ENCODE measurements at regions of chr19 and their contacts with region 1.

Region 1: DNA sequence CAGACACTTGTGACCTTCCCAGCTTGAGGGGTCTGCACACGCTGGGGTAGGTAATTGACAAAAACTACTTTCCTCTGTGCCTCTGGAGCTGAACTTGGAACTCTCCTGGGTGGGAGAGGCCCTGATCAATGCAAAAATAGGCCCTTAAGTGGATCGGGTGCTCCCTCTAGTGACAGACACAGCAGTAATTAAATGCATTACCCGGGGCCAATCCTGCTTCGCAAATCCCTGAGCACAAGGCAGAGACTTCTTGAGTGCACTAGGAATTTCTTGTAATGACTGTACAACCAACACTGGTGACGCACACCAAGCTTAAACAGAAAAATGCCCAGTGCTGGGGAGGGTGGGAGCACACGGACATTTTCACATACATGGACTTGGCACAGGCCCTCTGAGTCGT is 10.6 kb upstream of the UBE2S start:
- DNase-seq: peak; percentile 73
- H3K4me3 Mint-ChIP-seq: no peak overlapping the region
- H3K27ac Mint-ChIP-seq: no peak overlapping the region
- H3K4me1 Mint-ChIP-seq: peaks cover 13% of the 10 kb centered on the region
- H3K27me3 Mint-ChIP-seq: no peaks in the 10 kb centered on the region

Region 2: GRCh38 chr19:55216461-55217198 is 201.6 kb before region 1 on chr19:
- CTCF ChIA-PET with region 1: no interaction called
- intact Hi-C with region 1: loop called (anchors 1 kb)
- DNase-seq: peak; percentile 79
- H3K4me3 Mint-ChIP-seq: peak overlapping the region; percentile 50
- H3K27ac Mint-ChIP-seq: no peak overlapping the region
- H3K4me1 Mint-ChIP-seq: peaks cover 13% of the 10 kb centered on the region
- H3K27me3 Mint-ChIP-seq: peaks cover 22% of the 10 kb centered on the region

Region 3: DNA sequence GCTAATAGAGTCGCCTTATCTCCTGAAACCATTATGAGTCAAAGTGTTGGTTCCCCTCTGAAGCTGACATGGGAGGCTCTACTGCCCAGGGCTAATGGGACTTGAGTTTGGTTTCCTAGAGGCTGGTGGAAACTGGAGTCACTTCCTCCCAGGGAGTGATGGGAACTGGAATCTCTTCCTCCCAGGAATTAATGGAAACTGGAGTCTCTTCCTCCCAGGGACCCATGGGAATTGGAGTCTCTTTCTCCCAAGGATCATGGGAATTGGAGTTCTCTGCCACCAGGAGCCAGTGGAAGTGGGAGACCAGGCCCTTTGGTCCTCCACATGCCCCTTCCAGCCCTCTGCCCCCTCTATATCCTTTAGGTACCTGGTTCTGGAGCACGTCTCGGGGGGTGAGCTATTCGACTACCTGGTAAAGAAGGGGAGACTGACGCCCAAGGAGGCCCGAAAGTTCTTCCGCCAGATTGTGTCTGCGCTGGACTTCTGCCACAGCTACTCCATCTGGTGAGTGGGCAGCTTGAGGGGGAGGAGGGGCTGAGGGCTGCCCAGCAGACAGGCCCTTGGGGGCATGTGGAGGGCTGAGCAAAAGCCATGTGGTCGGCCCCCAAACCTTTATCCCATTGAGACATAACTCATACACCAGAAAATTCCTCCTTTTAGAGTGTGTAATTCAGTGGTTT is 128.9 kb before region 1 on chr19:
- CTCF ChIA-PET with region 1: interaction called, 12 read pairs
- intact Hi-C with region 1: no loop called
- DNase-seq: no peak
- H3K4me3 Mint-ChIP-seq: no peak overlapping the region
- H3K27ac Mint-ChIP-seq: no peak overlapping the region
- H3K4me1 Mint-ChIP-seq: peaks cover 4% of the 10 kb centered on the region
- H3K27me3 Mint-ChIP-seq: no peaks in the 10 kb centered on the region

Measured in activated naive CD4-positive, alpha-beta T cell treated with anti-CD3 and anti-CD28 coated beads for 36 hours (primary cell).